ENCODE measurements at regions of chr12 and their contacts with region 1.

Region 1: DNA sequence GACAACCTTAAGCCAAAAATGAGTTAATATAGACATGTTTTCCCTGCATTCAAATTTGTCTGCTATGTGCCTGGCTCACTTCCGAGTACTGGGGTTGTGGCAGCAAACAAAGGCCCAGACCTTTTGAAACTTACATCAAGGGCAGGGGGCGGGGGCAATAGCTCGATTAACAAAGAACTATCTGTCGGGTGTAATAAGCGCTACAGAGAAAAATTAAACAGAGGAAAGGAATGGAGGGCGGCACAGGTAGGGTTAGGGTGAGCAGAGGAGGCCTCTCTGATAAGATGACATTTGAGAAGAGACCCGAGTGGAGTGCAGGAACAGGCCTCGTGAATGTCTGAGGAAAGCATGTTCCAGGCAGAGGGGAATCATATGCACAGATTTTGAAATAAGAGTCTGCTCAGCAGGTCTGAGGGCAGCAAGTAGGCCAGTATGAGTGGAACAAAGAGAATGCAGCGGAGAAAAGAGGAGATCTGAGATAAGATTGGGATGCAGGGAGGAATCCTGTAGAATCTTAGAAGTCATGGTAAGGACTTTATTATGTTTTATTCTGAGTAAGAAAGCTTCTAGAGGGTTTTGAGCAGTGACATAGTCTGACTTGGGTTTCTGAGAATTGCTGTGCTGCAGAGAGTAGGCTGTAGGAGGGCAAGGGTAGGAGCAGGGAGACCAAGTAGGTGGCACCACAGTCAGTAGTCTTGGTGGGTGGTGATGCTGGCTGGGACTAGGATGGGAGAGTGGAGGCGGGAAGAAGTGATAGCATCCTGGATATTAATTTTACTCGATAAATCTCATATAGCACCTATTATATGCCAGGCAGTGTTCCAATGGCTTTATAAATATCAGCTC is 52.6 kb downstream of the BICDL1 start:
- DNase-seq: peak; percentile 35
- H3K4me3 Mint-ChIP-seq: no peak overlapping the region
- H3K27ac Mint-ChIP-seq: peak overlapping the region; percentile 82
- H3K4me1 Mint-ChIP-seq: peaks cover 21% of the 10 kb centered on the region
- H3K27me3 Mint-ChIP-seq: no peaks in the 10 kb centered on the region
- CTCF ChIP-seq: no peak

Region 2: GRCh38 chr12:119980242-119980641 is 61.4 kb before region 1 on chr12:
- CTCF ChIA-PET with region 1: no interaction called
- POLR2A ChIA-PET with region 1: no interaction called
- intact Hi-C with region 1: no loop called
- DNase-seq: no peak
- H3K4me3 Mint-ChIP-seq: no peak overlapping the region
- H3K27ac Mint-ChIP-seq: no peak overlapping the region
- H3K4me1 Mint-ChIP-seq: no peaks in the 10 kb centered on the region
- H3K27me3 Mint-ChIP-seq: peaks cover 25% of the 10 kb centered on the region
- CTCF ChIP-seq: no peak

Region 3: GRCh38 chr12:120055231-120056021 is 13.8 kb after region 1 on chr12:
- CTCF ChIA-PET with region 1: interaction called, 6 read pairs
- POLR2A ChIA-PET with region 1: interaction called, 48 read pairs
- intact Hi-C with region 1: no loop called
- DNase-seq: peak; percentile 80
- H3K4me3 Mint-ChIP-seq: peak overlapping the region; percentile 30
- H3K27ac Mint-ChIP-seq: peak overlapping the region; percentile 88
- H3K4me1 Mint-ChIP-seq: peaks cover 17% of the 10 kb centered on the region
- H3K27me3 Mint-ChIP-seq: no peaks in the 10 kb centered on the region
- CTCF ChIP-seq: no peak

Region 4: DNA sequence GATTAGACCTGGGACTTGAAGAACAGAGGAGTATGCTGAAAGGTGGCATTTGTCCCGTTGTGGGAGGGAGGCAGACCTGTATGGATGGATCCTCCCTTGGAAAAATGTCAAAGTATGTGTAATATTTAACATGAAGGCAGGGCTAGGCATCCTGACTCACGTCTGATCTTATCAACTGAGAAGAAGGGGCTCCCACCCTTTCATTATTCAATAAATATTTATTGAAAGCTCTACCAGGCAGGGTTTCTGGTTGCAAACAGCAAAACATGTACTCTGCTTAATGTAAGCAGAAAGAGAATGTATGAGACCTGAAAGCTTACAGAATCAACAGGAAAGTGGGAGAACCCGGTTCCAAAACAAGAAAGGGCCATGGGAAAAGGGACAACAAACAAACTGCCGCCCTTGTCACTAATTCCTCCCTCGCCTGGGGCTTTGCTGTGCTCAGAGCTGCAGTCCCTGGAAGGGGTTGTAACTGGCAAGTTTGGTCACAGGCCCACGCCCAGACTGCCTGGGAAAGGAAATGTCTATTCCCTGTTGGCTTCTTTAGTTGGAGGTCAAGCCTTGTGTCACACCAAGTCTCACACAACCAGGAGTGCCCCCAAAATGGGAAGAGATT is 37.9 kb after region 1 on chr12:
- CTCF ChIA-PET with region 1: interaction called, 3 read pairs
- POLR2A ChIA-PET with region 1: interaction called, 11 read pairs
- intact Hi-C with region 1: no loop called
- DNase-seq: peak; percentile 43
- H3K4me3 Mint-ChIP-seq: no peak overlapping the region
- H3K27ac Mint-ChIP-seq: peak overlapping the region; percentile 6
- H3K4me1 Mint-ChIP-seq: peaks cover 15% of the 10 kb centered on the region
- H3K27me3 Mint-ChIP-seq: no peaks in the 10 kb centered on the region
- CTCF ChIP-seq: no peak

Region 5: DNA sequence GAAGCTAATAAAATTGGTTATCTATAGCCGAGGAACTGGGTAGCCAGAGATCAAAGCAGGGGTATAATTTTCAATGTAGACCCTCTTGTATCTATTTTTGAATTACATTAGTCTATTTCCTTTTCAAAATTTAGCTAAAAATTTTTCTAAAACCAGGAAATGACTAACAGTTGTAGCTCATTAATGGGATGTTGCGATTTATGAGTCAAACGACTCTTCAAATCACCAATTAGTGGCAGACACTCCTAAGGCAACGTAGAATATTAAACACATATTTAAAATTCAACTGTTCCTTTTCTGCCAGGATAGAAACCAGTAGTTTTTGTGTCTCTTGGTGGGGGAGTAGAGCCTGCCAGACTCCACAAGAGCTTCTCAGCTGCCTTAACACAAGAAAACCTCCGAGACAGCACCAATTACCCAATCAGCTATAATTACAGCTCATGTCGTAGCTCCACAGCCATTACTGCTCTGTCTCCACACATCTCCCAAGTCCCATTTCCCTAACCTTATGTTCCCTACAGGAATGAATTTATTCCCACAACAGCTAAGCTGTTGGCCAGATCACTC is 126.0 kb after region 1 on chr12:
- CTCF ChIA-PET with region 1: no interaction called
- POLR2A ChIA-PET with region 1: no interaction called
- intact Hi-C with region 1: no loop called
- DNase-seq: no peak
- H3K4me3 Mint-ChIP-seq: no peak overlapping the region
- H3K27ac Mint-ChIP-seq: no peak overlapping the region
- H3K4me1 Mint-ChIP-seq: no peaks in the 10 kb centered on the region
- H3K27me3 Mint-ChIP-seq: no peaks in the 10 kb centered on the region
- CTCF ChIP-seq: no peak

Measured in MCF 10A (cell line).